ENCODE measurements at regions of chr5 and their contacts with region 1.

Region 1: DNA sequence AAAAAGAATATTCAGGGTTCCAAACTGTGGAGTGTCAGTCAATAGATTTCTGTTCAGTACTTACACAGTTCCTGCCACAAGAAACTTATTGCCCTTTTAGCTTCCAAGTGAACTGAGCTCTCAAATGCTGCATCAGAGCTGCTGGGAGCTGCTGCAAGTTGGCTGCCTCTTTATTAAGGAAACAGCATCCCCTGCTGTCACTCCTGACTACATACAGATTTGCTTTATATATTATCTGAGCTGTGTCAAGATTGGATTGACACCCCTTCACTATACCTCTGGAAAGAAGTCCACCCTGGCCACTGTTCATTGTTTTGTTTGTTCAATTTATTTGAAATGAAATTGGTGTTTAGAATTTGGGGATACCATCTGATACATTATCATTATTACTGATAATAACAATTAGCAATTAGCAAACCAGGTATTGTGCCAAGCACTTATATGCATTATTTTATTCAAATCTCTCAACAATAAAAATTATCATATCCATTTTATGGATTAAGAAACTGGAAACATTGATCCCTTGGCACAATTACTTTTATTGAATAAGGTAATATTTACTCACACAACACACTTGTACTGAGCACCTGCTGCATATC is 16.4 kb upstream of the C5orf58 start:
- DNase-seq: peak; percentile 45
- H3K4me3 ChIP-seq: no peak overlapping the region
- H3K27ac ChIP-seq: no peak overlapping the region
- H3K4me1 ChIP-seq: peaks cover 31% of the 10 kb centered on the region
- H3K27me3 ChIP-seq: no peaks in the 10 kb centered on the region
- CTCF ChIP-seq: peak; percentile 89

Region 2: DNA sequence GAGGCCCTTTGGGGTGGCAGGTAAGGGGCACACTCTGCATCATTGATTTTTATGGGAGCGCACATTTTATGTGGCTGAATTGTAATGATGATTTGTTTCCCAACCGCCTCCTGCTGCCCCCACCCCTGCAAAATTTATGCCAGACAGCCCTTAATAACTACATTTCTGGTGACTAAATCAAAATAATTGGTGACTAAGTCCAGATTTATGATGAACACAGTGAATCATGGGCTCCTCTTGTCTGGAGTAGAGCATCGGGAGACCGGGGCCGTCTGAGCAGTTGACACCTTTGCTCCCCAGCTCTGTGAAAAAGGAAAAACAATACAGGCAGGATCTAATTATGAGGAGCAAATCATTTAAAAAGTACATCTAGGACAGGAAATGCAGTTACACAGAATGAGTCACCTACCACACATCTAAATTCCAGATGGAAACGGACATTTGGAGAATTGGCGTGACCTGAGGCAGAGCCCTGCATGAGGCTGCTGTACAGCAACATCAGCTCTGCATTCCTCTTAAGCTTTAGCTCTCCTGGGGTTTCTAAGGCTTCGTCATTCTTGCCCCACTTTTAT is 520.4 kb before region 1 on chr5:
- CTCF ChIA-PET with region 1: interaction called, 7 read pairs
- dilution Hi-C with region 1: no loop called
- in situ Hi-C with region 1: no loop called
- intact Hi-C with region 1: loop called (anchors 2 kb)
- DNase-seq: peak; percentile 93
- H3K4me3 ChIP-seq: no peak overlapping the region
- H3K27ac ChIP-seq: peak overlapping the region; percentile 38
- H3K4me1 ChIP-seq: peaks cover 27% of the 10 kb centered on the region
- H3K27me3 ChIP-seq: no peaks in the 10 kb centered on the region
- CTCF ChIP-seq: no peak

Region 3: GRCh38 chr5:169914766-169915165 is 301.6 kb before region 1 on chr5:
- CTCF ChIA-PET with region 1: no interaction called
- dilution Hi-C with region 1: no loop called
- in situ Hi-C with region 1: no loop called
- intact Hi-C with region 1: loop called (anchors 10 kb)
- DNase-seq: peak; percentile 13
- H3K4me3 ChIP-seq: no peak overlapping the region
- H3K27ac ChIP-seq: no peak overlapping the region
- H3K4me1 ChIP-seq: no peaks in the 10 kb centered on the region
- H3K27me3 ChIP-seq: no peaks in the 10 kb centered on the region
- CTCF ChIP-seq: no peak

Region 4: GRCh38 chr5:170100066-170100943 is 116.1 kb before region 1 on chr5:
- CTCF ChIA-PET with region 1: interaction called, 10 read pairs
- dilution Hi-C with region 1: no loop called
- in situ Hi-C with region 1: loop called in 1 of 2 experiments (anchors 10 kb)
- intact Hi-C with region 1: loop called (anchors 1 kb)
- DNase-seq: peak; percentile 38
- H3K4me3 ChIP-seq: no peak overlapping the region
- H3K27ac ChIP-seq: no peak overlapping the region
- H3K4me1 ChIP-seq: no peaks in the 10 kb centered on the region
- H3K27me3 ChIP-seq: no peaks in the 10 kb centered on the region
- CTCF ChIP-seq: peak; percentile 52 to 69

Region 5: DNA sequence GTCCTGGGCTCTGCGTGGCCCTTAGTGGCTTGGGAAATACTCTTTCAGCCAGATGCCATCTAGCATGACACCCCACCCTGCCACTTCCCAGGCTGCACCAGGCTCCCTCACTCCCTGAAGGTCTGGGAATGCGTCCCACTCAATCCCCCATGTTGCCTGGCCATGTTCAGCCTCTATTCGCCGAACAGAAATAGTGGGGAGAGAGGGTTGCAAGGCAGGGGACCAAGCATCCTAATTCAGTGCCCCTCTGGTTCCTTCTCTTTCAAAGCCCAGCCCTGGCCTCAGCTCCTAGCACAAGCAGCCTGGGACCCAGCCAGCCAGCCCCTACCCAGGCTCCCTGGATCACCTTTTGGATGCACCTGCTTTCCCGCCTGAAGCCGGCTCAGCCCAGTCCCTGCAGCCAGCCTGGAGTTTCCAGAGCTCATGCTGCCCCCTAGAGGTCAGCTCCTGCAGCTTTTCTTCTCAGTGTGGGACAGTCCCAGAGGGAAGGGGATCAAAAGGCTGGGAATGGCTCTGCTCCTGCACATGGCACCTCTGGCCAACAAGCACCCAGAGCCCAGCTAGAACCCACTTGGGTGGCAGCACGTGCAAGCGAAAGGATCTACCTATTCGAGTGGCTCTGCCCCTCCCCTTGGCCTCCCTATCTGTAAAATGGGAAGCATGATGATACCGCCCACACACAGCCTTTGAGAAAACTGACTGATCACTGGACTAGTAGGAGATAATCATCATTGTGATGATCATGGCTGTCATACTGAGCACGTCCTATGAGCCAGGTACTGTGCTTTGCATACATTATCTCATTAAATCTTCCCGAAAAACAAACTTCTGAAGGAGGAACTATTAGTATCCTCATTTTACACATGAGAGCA is 32.3 kb before region 1 on chr5:
- CTCF ChIA-PET with region 1: interaction called, 7 read pairs
- dilution Hi-C with region 1: no loop called
- in situ Hi-C with region 1: no loop called
- intact Hi-C with region 1: loop called (anchors 1 kb)
- DNase-seq: peak; percentile 35
- H3K4me3 ChIP-seq: no peak overlapping the region
- H3K27ac ChIP-seq: no peak overlapping the region
- H3K4me1 ChIP-seq: no peaks in the 10 kb centered on the region
- H3K27me3 ChIP-seq: no peaks in the 10 kb centered on the region
- CTCF ChIP-seq: peak; percentile 85 to 91